A549 (cell line): ENCODE measurements at regions of chr9 and their contacts with region 1.

Region 1: GRCh38 chr9:133347985-133348717 is at the starts of genes MED22 and RPL7A:
- DNase-seq: peak; percentile 90 to 96
- ATAC-seq: peak; percentile 74 to 83
- H3K4me3 ChIP-seq: peak within 1 kb of the TSS; percentile 100
- H3K27ac ChIP-seq: peak within 1 kb of the TSS; percentile 98 to 99
- H3K4me1 ChIP-seq: peaks cover 19% of the 10 kb centered on the region
- CTCF ChIP-seq: no peak
- EP300 ChIP-seq: no peak
- POLR2A ChIP-seq: peak; percentile 99
- RAD21 ChIP-seq: no peak
- polyA plus RNA-seq, gene MED22: 15.7 and 18.4 TPM in 2 replicates
- polyA plus RNA-seq, gene RPL7A: 2,218 and 2,405 TPM in 2 replicates

Region 2: DNA sequence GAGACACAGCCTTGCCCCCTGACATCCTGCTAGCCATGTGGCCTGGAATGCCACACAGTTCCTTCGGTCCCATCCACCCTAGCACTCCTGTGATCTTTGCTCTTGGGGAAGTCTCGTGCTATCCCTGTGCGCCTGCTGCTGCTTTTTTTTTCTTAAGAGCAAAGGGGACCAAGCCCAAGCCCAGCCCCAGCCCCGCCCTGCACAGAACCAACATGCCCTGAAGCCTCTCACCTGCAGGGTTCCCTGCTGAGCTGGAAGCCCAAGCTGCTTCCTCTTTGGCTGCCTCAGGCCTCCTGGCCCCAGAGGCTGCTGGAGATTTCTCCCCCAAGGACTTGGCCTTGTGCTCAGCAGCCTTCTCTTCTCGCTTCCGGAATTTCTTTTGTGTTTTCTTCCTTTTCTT is 14.0 kb before region 1 on chr9:
- CTCF ChIA-PET with region 1: interaction called, 59 read pairs
- POLR2A ChIA-PET with region 1: interaction called, 7 read pairs
- DNase-seq: no peak
- ATAC-seq: no peak
- H3K4me3 ChIP-seq: no peak overlapping the region
- H3K27ac ChIP-seq: no peak overlapping the region
- H3K4me1 ChIP-seq: peaks cover 16% of the 10 kb centered on the region
- CTCF ChIP-seq: no peak
- EP300 ChIP-seq: no peak
- POLR2A ChIP-seq: no peak
- RAD21 ChIP-seq: no peak